Naive thymus-derived CD4-positive, alpha-beta T cell (primary cell): ENCODE measurements at regions of chr19 and their contacts with region 1.

Region 1: DNA sequence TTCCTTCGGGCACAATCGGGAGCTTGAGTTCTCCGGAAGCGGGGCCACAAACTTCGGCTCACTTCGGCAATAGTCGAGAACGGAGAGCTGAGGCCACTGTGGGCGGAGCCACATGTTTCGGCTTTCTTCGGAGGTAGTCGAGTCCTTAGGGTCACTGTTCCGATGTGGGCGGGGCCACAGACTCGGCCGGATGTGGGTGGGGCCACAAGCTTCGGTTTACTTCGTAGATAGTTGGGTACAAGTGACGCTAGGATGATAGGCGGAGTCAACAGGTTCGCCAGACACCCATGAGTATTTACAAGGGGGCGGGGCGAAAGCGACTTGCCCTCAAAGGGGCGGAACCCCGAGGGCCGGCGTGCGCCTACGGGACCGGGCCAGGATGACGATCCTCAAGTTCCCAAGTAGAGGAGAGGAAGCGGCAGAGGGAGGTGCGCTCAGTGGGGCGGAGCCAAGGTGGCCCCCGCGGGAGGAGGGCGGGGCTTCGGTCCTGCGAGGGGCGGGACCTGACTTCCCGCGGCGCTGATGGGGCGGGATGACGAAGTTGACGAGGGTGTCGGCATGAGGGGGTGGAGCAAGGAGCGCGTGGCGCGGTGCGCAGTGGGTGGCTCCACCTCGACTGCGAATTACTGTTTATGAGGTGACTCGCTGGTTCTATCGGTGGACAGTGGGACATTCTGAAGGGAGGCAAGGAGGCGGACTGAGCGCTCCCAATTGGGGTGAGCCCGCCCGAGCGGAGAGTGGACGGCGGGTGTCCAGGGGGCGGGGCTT is 539 bp upstream of the MBOAT7 start:
- DNase-seq: peak; percentile 98 to 100 (median 100)
- ATAC-seq: peak; percentile 73
- H3K4me3 ChIP-seq: peak overlapping the region; percentile 81
- H3K4me3 Mint-ChIP-seq: peak overlapping the region; percentile 90 to 100 (median 93)
- H3K27ac ChIP-seq: peak overlapping the region; percentile 99
- H3K27ac Mint-ChIP-seq: peak overlapping the region; percentile 97 to 100 (median 99)
- H3K4me1 ChIP-seq: peaks cover 20 to 22% of the 10 kb centered on the region in 2 donors
- H3K4me1 Mint-ChIP-seq: peaks cover 15 to 47% (median 39%) of the 10 kb centered on the region in 7 donors
- H3K27me3 ChIP-seq: no peaks in the 10 kb centered on the region
- H3K27me3 Mint-ChIP-seq: peaks cover 0 to 2% (median 0%) of the 10 kb centered on the region in 5 donors

Region 2: GRCh38 chr19:53553884-53554791 is 635.8 kb before region 1 on chr19:
- CTCF ChIA-PET with region 1: no interaction called
- POLR2A ChIA-PET with region 1: no interaction called
- intact Hi-C with region 1: loop called in 1 of 2 experiments (anchors 5 kb)
- DNase-seq: peak; percentile 90 to 97 (median 95)
- ATAC-seq: peak; percentile 88
- H3K4me3 ChIP-seq: peak overlapping the region; percentile 67
- H3K4me3 Mint-ChIP-seq: peak overlapping the region; percentile 91 to 99 (median 96)
- H3K27ac ChIP-seq: peak overlapping the region; percentile 97
- H3K27ac Mint-ChIP-seq: peak overlapping the region; percentile 96 to 100 (median 100)
- H3K4me1 ChIP-seq: peaks cover 4 to 6% of the 10 kb centered on the region in 2 donors
- H3K4me1 Mint-ChIP-seq: peaks cover 10 to 46% (median 29%) of the 10 kb centered on the region in 7 donors
- H3K27me3 ChIP-seq: no peaks in the 10 kb centered on the region
- H3K27me3 Mint-ChIP-seq: no peaks in the 10 kb centered on the region

Region 3: GRCh38 chr19:54115109-54116063 is 74.5 kb before region 1 on chr19 and contains the starts of genes PRPF31 and TFPT:
- CTCF ChIA-PET with region 1: interaction called, 4 read pairs
- POLR2A ChIA-PET with region 1: interaction called, 22 read pairs
- intact Hi-C with region 1: loop called (anchors 1 kb)
- DNase-seq: peak; percentile 80 to 98 (median 97)
- ATAC-seq: peak; percentile 92
- H3K4me3 ChIP-seq: peak within 1 kb of the TSS; percentile 94
- H3K4me3 Mint-ChIP-seq: peak within 1 kb of the TSS; percentile 86 to 96 (median 94)
- H3K27ac ChIP-seq: peak within 1 kb of the TSS; percentile 88
- H3K27ac Mint-ChIP-seq: peak within 1 kb of the TSS; percentile 88 to 97 (median 94)
- H3K4me1 ChIP-seq: peaks cover 11 to 20% of the 10 kb centered on the region in 2 donors
- H3K4me1 Mint-ChIP-seq: peaks cover 23 to 48% (median 42%) of the 10 kb centered on the region in 7 donors
- H3K27me3 ChIP-seq: no peaks in the 10 kb centered on the region
- H3K27me3 Mint-ChIP-seq: peaks cover 0 to 2% (median 0%) of the 10 kb centered on the region in 5 donors
- total RNA-seq, gene PRPF31: 51.8 to 82.1 (median 71.0) TPM
- total RNA-seq, gene TFPT: 13.4 to 46.5 (median 14.6) TPM

Region 4: GRCh38 chr19:54168174-54168917 is 21.6 kb before region 1 on chr19:
- CTCF ChIA-PET with region 1: interaction called, 4 read pairs
- POLR2A ChIA-PET with region 1: interaction called, 9 read pairs
- intact Hi-C with region 1: loop called (anchors 1 kb)
- DNase-seq: peak; percentile 66 to 94 (median 82)
- ATAC-seq: peak; percentile 89
- H3K4me3 ChIP-seq: no peak overlapping the region
- H3K4me3 Mint-ChIP-seq: peak overlapping the region in 2 of 10 donors; percentile 8 to 28
- H3K27ac ChIP-seq: no peak overlapping the region
- H3K27ac Mint-ChIP-seq: no peak overlapping the region
- H3K4me1 ChIP-seq: peaks cover 4 to 12% of the 10 kb centered on the region in 2 donors
- H3K4me1 Mint-ChIP-seq: peaks cover 10 to 25% (median 17%) of the 10 kb centered on the region in 7 donors
- H3K27me3 ChIP-seq: no peaks in the 10 kb centered on the region
- H3K27me3 Mint-ChIP-seq: no peaks in the 10 kb centered on the region

Region 5: DNA sequence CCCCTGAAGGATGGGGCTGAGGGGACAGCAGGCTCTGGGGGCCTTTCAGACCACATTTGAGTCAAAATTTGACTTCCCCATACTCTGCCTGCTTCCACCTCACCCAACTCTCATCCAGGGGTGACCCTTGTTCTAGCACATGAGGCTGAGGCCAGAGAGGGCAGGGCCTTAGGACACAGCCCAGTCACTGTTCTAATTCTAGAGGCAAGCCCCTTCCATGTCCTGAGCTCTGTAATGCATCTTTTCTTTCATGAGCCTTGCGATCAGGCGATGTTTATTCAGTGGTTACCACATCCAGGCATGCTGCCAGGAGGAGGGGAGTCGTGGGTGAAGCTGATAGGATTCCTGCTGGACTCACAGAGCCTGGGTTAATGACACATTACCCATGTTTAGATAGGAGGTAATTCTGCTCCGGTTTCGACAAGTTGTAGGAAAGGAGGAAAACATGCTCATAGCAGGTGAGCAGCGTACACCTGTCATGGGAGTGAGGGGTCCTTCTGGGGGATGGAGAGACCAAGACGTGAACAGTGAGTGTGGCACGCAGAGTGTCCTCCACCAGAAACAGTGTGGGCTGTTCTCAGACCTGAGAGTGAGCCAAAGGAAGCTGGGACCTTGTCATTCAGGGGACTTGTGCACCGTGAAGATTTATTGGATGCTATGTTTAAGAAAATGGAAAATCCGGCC is 20.0 kb after region 1 on chr19:
- CTCF ChIA-PET with region 1: no interaction called
- POLR2A ChIA-PET with region 1: interaction called, 12 read pairs
- intact Hi-C with region 1: loop called in 1 of 2 experiments (anchors 2 kb)
- DNase-seq: no peak
- ATAC-seq: peak; percentile 46
- H3K4me3 ChIP-seq: no peak overlapping the region
- H3K4me3 Mint-ChIP-seq: peak overlapping the region; percentile 10 to 78 (median 56)
- H3K27ac ChIP-seq: peak overlapping the region; percentile 1
- H3K27ac Mint-ChIP-seq: peak overlapping the region in 8 of 9 donors; percentile 3 to 82 (median 72)
- H3K4me1 ChIP-seq: peaks cover 47 to 48% of the 10 kb centered on the region in 2 donors
- H3K4me1 Mint-ChIP-seq: peaks cover 37 to 65% (median 61%) of the 10 kb centered on the region in 7 donors
- H3K27me3 ChIP-seq: no peaks in the 10 kb centered on the region
- H3K27me3 Mint-ChIP-seq: no peaks in the 10 kb centered on the region

Region 6: DNA sequence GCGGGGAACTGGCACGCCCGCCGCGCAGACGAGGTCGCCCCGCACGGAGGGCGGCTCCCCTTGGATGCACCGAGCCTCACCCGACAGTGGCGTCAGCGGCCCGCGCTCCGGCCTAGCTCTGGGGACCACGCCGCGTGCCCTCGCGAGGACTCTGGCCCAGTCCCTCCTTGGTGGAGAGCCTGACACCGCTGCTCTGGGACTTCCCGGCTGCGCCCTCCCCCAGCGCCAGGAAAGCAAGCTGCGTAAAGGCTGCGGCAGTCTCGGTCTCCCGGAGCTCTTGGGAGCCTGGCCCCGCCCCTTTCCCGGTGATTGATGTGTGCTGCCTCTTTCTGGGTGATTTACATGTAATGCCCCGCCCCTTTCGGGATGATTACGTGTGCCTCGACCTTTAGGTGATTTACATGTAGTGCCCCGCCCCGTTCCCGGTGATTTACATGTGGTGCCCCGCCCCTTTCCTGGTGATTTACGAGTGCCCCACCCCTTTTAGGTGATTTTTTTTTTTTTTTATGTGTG is 273.7 kb after region 1 on chr19 and contains the start of gene LENG9:
- CTCF ChIA-PET with region 1: no interaction called
- POLR2A ChIA-PET with region 1: no interaction called
- intact Hi-C with region 1: loop called (anchors 1 kb)
- DNase-seq: peak; percentile 73 to 97 (median 87)
- ATAC-seq: peak; percentile 81
- H3K4me3 ChIP-seq: peak within 1 kb of the TSS; percentile 88
- H3K4me3 Mint-ChIP-seq: peak within 1 kb of the TSS; percentile 84 to 95 (median 92)
- H3K27ac ChIP-seq: peak within 1 kb of the TSS; percentile 71
- H3K27ac Mint-ChIP-seq: peak within 1 kb of the TSS; percentile 86 to 98 (median 93)
- H3K4me1 ChIP-seq: peaks cover 17 to 23% of the 10 kb centered on the region in 2 donors
- H3K4me1 Mint-ChIP-seq: peaks cover 16 to 35% (median 33%) of the 10 kb centered on the region in 7 donors
- H3K27me3 ChIP-seq: peaks cover 0 to 3% of the 10 kb centered on the region in 2 donors
- H3K27me3 Mint-ChIP-seq: peaks cover 5 to 23% (median 7%) of the 10 kb centered on the region in 5 donors
- total RNA-seq, gene LENG9: 3.5 to 6.1 (median 4.3) TPM

Region 7: GRCh38 chr19:55599468-55600279 is 1409.8 kb after region 1 on chr19 and contains the start of gene FIZ1:
- CTCF ChIA-PET with region 1: no interaction called
- POLR2A ChIA-PET with region 1: interaction called, 3 read pairs
- intact Hi-C with region 1: loop called in 1 of 2 experiments (anchors 1 kb)
- DNase-seq: peak; percentile 88 to 97 (median 95)
- ATAC-seq: peak; percentile 84
- H3K4me3 ChIP-seq: peak within 1 kb of the TSS; percentile 93
- H3K4me3 Mint-ChIP-seq: peak within 1 kb of the TSS; percentile 90 to 100 (median 99)
- H3K27ac ChIP-seq: peak within 1 kb of the TSS; percentile 93
- H3K27ac Mint-ChIP-seq: peak within 1 kb of the TSS; percentile 97 to 100 (median 99)
- H3K4me1 ChIP-seq: peaks cover 0 to 15% of the 10 kb centered on the region in 2 donors
- H3K4me1 Mint-ChIP-seq: peaks cover 20 to 36% (median 30%) of the 10 kb centered on the region in 7 donors
- H3K27me3 ChIP-seq: no peaks in the 10 kb centered on the region
- H3K27me3 Mint-ChIP-seq: no peaks in the 10 kb centered on the region
- total RNA-seq, gene FIZ1: 9.4 to 32.0 (median 16.1) TPM